Vagina (tissue), 2 donors: ENCODE measurements at regions of chr14 and their contacts with region 1.

Region 1: GRCh38 chr14:37223947-37224474 is 26.3 kb downstream of the MIPOL1 start:
- DNase-seq: no peak
- H3K4me3 ChIP-seq: no peak overlapping the region
- H3K27ac ChIP-seq: no peak overlapping the region
- H3K4me1 ChIP-seq: no peaks in the 10 kb centered on the region
- H3K27me3 ChIP-seq: no peaks in the 10 kb centered on the region
- CTCF ChIP-seq: no peak
- POLR2A ChIP-seq: no peak

Region 2: DNA sequence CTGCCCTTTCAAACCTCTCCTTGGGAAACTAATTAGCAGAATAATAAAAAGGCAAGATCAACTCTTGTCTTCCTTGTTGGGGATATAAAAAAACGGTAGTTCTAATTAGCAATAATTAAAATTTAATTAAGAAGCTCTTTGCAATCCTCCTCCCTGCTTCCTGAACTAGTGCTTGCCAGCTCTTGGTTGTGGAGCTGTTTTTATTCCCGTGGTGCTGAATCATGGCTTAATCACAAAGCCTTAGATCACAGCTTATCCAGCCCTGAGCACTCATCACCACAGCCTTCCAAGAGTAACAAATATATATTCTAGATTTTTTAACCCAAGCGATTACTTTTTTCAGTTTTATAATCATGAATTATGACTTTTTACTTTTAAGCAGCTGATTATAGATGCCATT is 1753.3 kb before region 1 on chr14:
- intact Hi-C with region 1: no loop called
- DNase-seq: no peak
- H3K4me3 ChIP-seq: no peak overlapping the region
- H3K27ac ChIP-seq: no peak overlapping the region
- H3K4me1 ChIP-seq: no peaks in the 10 kb centered on the region
- H3K27me3 ChIP-seq: no peaks in the 10 kb centered on the region
- CTCF ChIP-seq: no peak
- POLR2A ChIP-seq: no peak

Region 3: GRCh38 chr14:39122330-39123138 is 1898.5 kb after region 1 on chr14:
- intact Hi-C with region 1: loop called (anchors 5 kb)
- DNase-seq: no peak
- H3K4me3 ChIP-seq: no peak overlapping the region
- H3K27ac ChIP-seq: peak overlapping the region; percentile 42
- H3K4me1 ChIP-seq: peaks cover 11% of the 10 kb centered on the region
- H3K27me3 ChIP-seq: no peaks in the 10 kb centered on the region
- CTCF ChIP-seq: no peak
- POLR2A ChIP-seq: no peak